ENCODE measurements at regions of chr10 and their contacts with region 1.

Region 1: DNA sequence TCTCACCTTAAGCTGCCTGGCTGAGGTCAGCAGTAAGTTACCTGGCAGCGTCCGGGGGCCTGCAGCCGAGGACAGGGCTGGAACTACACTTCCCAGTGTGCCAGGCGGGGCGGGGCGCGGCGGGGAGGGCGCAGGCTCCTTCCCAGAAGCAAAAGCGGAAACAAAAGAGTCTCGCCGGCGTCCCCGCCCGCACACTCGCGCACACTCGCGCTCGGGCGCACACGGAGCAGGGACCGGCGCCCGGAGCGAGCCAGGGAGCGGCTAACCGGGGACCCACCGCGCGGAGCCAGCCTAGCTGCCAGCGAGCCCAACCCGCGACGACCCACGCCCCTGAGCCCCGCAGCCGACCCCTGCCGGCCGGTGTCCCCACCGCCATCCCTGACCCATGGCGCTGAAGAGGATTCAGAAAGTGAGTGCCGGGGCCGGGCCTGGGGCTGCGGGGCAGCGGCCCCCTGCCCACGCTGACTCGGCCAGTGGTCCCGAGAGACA is at the start of gene UBE2D1:
- DNase-seq: peak; percentile 94
- ATAC-seq: peak; percentile 98 to 99
- total RNA-seq, gene UBE2D1: 27.8 to 31.3 TPM

Region 2: GRCh38 chr10:58094985-58095718 is 239.7 kb before region 1 on chr10:
- intact Hi-C with region 1: no loop called
- DNase-seq: no peak
- ATAC-seq: no peak

Region 3: GRCh38 chr10:58268870-58269605 is 65.8 kb before region 1 on chr10 and contains the start of gene CISD1:
- intact Hi-C with region 1: loop called in 1 of 2 experiments (anchors 2 kb)
- DNase-seq: peak; percentile 97
- ATAC-seq: peak; percentile 88 to 93
- total RNA-seq, gene CISD1: 133 to 135 TPM

Region 4: DNA sequence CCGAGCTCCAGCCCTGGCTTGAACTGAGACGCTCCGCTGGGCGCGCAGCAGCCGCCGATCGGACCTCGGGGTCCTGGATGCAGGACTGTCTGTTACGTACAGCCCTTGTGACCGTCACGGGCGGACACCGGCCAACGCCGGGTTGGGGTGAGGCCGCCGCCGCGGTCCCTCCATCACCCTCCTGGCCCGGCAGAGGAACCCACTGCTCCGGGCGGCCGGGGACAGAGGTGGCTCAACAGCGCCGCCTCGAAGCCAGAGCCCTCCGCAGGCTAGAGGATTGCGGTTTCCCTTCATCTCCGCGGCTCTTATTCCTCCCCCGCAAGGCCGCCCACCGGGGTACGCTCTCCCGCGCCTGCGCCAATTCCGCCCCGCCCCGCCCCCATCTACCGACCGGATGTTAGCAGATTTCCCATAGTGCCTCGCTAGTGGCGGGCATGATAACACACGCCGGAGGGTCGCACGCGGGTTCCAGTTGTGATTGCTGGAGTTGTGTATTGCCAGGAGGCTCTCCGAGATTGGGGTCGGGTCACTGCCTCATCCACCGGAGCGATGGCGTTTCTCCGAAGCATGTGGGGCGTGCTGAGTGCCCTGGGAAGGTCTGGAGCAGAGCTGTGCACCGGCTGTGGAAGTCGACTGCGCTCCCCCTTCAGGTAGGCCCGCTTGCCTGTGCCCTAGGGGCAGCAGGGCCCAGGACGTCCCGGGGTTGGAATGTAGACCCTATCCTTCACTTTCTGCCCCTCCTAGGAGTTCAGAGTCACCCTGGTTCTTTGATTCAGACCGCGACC is 50.3 kb after region 1 on chr10 and contains the start of gene TFAM:
- intact Hi-C with region 1: loop called in 1 of 2 experiments (anchors 10 kb)
- DNase-seq: peak; percentile 96
- ATAC-seq: peak; percentile 98 to 99
- total RNA-seq, gene TFAM: 32.2 to 32.6 TPM

Region 5: GRCh38 chr10:58952747-58953466 is 618.0 kb after region 1 on chr10:
- intact Hi-C with region 1: no loop called
- DNase-seq: peak; percentile 38
- ATAC-seq: peak; percentile 66 to 82

Region 6: GRCh38 chr10:59405235-59405634 is 1070.4 kb after region 1 on chr10:
- intact Hi-C with region 1: no loop called
- DNase-seq: no peak
- ATAC-seq: no peak

Measured in left cardiac atrium (tissue), 4 donors.